Esophagus squamous epithelium (tissue), 5 donors: ENCODE measurements at regions of chr20 and their contacts with region 1.

Region 1: DNA sequence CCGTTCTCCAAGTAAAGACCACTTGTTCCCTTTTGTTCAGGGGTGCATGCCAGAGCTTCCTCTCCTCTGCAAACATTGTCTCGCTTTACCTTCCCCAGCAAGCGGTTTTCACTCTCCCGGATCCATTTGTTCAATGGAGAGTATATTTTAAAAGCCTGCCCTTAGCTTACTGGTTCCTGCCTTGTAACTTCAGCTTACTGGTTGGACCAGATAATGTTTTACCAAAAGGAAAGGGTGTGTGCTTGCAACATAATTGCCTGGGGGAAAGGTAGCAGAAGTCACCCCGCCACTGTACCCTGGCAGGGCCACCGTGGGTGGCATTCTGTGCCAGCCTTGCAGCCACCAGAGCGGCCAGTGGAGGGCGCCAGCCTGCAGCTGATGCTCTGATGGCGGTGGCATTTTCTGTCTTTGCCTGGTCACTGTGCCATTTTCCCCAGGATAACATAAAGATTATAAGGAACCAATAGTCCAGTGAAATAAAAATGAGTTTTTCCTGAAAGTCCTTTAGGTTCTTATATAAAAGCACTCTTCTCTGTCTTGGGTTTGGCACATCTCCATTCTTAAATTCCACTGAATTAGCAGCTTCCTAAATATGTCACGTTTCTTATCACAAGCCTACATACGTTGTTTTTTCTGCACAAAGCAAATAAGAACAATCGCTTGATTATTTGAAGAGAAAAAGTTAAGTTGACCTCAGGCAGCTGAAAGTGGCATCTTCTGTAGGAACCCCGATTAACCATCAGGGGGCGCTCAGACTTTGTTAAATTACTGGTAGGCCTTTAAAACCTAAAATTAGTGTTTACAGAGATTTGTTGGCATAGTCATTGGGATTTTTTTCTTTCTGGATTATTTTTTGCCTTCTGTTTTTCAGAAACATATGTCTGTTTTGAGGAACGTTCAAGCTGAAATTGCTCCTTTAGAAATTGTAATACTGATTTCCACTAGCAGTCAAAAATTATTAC is 67.4 kb upstream of the XRN2 start:
- DNase-seq: no peak
- H3K4me3 ChIP-seq: no peak overlapping the region
- H3K27ac ChIP-seq: no peak overlapping the region
- H3K4me1 ChIP-seq: peaks cover 0 to 11% (median 3%) of the 10 kb centered on the region in 3 donors
- H3K27me3 ChIP-seq: no peaks in the 10 kb centered on the region
- CTCF ChIP-seq: peak; percentile 60 to 81 (median 69)
- POLR2A ChIP-seq: no peak

Region 2: GRCh38 chr20:21505161-21505809 is 269.5 kb after region 1 on chr20:
- intact Hi-C with region 1: loop called (anchors 2 kb)
- DNase-seq: no peak
- H3K4me3 ChIP-seq: peak overlapping the region in 3 of 4 donors; percentile 7 to 62 (median 45)
- H3K27ac ChIP-seq: no peak overlapping the region
- H3K4me1 ChIP-seq: peaks cover 16 to 32% (median 25%) of the 10 kb centered on the region in 3 donors
- H3K27me3 ChIP-seq: peaks cover 15 to 100% (median 38%) of the 10 kb centered on the region in 4 donors
- CTCF ChIP-seq: peak; percentile 86 to 98 (median 97)
- POLR2A ChIP-seq: no peak